Dendritic cell treated with granulocyte-macrophage colony-stimulating factor and Interleukin-4, amounts not matched to agents 40 ng/mL and 50 ng/mL, for 4 days (primary cell): ENCODE measurements at regions of chr13 and their contacts with region 1.

Region 1: GRCh38 chr13:25286969-25287961 is at the start of gene MTMR6:
- H3K4me3 Mint-ChIP-seq: peak within 1 kb of the TSS; percentile 95
- H3K27ac Mint-ChIP-seq: peak within 1 kb of the TSS; percentile 98
- H3K4me1 Mint-ChIP-seq: peaks cover 55% of the 10 kb centered on the region
- H3K27me3 Mint-ChIP-seq: peaks cover 2% of the 10 kb centered on the region

Region 2: DNA sequence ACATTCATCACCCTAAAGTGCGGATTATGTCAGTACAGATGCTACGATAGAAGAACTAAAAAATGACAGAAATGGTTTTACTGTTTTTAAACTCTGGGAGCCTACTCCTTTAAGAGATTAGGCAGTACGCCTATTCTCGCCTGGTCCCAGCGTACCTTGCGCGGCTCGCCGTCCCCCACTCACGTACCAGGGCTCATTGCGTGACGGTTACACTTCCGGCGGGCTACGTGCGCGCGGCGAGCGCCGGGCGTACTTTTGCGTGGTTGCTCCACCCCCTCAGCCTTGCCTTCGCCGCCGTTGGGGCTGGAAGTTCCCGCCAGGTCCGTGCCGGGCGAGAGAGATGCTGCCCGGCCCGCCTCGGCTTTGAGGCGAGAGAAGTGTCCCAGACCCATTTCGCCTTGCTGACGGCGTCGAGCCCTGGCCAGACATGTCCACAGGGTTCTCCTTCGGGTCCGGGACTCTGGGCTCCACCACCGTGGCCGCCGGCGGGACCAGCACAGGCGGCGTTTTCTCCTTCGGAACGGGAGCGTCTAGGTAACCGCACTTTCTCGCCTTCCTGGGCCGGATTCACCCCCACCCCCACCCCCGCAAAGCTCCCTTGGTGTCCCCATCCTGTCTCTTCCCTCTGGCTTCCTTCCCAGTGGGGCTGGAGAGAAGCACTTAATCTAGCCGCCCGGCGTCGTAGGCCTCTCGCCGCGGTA is 14.2 kb after region 1 on chr13 and contains the start of gene NUP58:
- intact Hi-C with region 1: loop called (anchors 1 kb)
- H3K4me3 Mint-ChIP-seq: peak within 1 kb of the TSS; percentile 86
- H3K27ac Mint-ChIP-seq: peak within 1 kb of the TSS; percentile 89
- H3K4me1 Mint-ChIP-seq: peaks cover 50% of the 10 kb centered on the region
- H3K27me3 Mint-ChIP-seq: peaks cover 8% of the 10 kb centered on the region

Region 3: GRCh38 chr13:26112843-26113242 is 825.6 kb after region 1 on chr13:
- intact Hi-C with region 1: no loop called
- H3K4me3 Mint-ChIP-seq: no peak overlapping the region
- H3K27ac Mint-ChIP-seq: no peak overlapping the region
- H3K4me1 Mint-ChIP-seq: no peaks in the 10 kb centered on the region
- H3K27me3 Mint-ChIP-seq: no peaks in the 10 kb centered on the region